ENCODE measurements at regions of chr20 and their contacts with region 1.

Region 1: DNA sequence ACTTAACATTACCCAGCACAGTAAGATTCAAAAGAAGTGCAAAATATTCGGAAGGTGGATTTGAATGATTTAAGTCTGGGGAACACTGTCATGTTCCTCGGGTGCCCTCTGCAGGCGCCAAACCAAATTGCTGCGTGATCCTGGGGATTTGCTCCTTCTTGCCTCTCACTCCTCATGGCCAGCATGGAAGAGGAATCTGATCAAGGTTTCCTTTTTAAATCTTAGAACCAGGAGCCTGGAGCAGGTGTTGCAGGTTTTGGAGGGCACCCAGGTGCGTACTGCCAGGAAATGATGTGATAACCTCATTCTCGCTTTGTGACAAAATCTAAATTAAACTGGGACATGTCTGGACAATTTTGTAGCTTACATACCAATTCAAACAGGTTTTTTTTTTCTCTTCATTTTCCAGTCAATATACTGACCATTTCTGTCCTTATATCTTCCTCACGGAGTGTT is 8.1 kb upstream of the PFDN4 start:
- DNase-seq: peak; percentile 70
- H3K4me3 ChIP-seq: peak overlapping the region in 1 of 2 experiments; percentile 45; a peak in 1 of 4 replicates
- H3K27ac ChIP-seq: no peak overlapping the region
- H3K4me1 ChIP-seq: no peaks in the 10 kb centered on the region
- H3K27me3 ChIP-seq: no peaks in the 10 kb centered on the region
- CTCF ChIP-seq: peak; percentile 97
- EP300 ChIP-seq: no peak
- RAD21 ChIP-seq: peak; percentile 96

Region 2: DNA sequence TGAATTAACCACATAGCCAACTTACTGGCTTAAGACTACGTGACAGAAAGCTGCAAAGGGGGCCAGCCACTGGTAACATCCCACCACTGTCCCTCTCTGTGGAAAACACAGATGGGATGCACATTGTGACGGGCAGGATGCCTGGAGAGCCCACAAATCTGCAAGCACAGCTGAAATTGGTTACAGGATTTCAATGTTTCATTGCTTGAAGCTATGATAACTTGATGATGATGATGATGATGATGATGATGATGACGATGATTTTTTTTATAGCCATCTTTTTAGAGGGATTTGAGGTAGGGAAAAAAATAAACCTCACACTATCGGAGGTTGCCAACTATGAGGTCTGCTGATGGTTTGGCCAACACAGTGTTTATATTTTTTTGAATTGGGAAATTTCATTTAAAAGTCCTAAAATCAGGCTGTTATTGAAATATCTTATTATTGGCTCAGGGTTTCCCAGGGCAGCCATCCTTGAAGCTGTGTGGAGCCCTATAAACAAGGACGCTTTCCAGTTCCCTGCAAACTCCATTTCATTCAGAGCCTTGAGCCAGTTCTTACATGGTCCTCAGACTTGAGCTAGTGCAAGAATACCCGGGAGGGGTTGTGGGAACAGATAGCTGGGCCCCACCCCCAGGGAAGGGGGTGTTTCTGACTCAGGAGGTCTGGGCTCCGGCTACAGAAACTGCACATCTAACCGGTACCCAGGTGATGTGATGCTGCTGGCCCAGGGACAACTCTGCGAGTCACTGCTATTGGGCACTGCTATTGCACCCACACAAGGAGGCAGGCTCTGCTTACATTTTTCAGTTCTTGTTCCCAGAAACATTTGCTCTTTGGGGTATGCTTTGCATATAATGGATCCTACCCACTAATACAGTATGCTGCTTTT is 156.4 kb before region 1 on chr20:
- CTCF ChIA-PET with region 1: no interaction called
- POLR2A ChIA-PET with region 1: no interaction called
- DNase-seq: no peak
- H3K4me3 ChIP-seq: no peak overlapping the region
- H3K27ac ChIP-seq: no peak overlapping the region
- H3K4me1 ChIP-seq: no peaks in the 10 kb centered on the region; a peak in 1 of 4 replicates
- H3K27me3 ChIP-seq: no peaks in the 10 kb centered on the region
- CTCF ChIP-seq: no peak
- EP300 ChIP-seq: no peak
- RAD21 ChIP-seq: no peak

Region 3: GRCh38 chr20:54093423-54094267 is 106.1 kb before region 1 on chr20:
- CTCF ChIA-PET with region 1: interaction called, 499 read pairs
- POLR2A ChIA-PET with region 1: no interaction called
- DNase-seq: no peak
- H3K4me3 ChIP-seq: no peak overlapping the region
- H3K27ac ChIP-seq: no peak overlapping the region
- H3K4me1 ChIP-seq: peaks cover 0 to 3% of the 10 kb centered on the region in 2 experiments; a peak in 1 of 4 replicates
- H3K27me3 ChIP-seq: no peaks in the 10 kb centered on the region; the same call in 1 of the 2 replicates
- CTCF ChIP-seq: no peak
- EP300 ChIP-seq: no peak
- RAD21 ChIP-seq: no peak

Region 4: GRCh38 chr20:54173653-54174456 is 25.9 kb before region 1 on chr20 and contains the start of gene CYP24A1:
- CTCF ChIA-PET with region 1: interaction called, 28 read pairs
- POLR2A ChIA-PET with region 1: no interaction called
- DNase-seq: peak; percentile 52
- H3K4me3 ChIP-seq: peak within 1 kb of the TSS; percentile 34 to 51; a peak in 3 of 4 replicates
- H3K27ac ChIP-seq: no peak within 1 kb of the TSS
- H3K4me1 ChIP-seq: peaks cover 5 to 12% of the 10 kb centered on the region in 2 experiments; a peak in 1 of 4 replicates
- H3K27me3 ChIP-seq: peaks cover 19% of the 10 kb centered on the region; the same call in 1 of the 2 replicates
- CTCF ChIP-seq: no peak
- EP300 ChIP-seq: no peak
- RAD21 ChIP-seq: no peak
- polyA plus RNA-seq, gene CYP24A1: 8.8 and 9.1 TPM in 2 replicates

Region 5: GRCh38 chr20:54188132-54188849 is 11.5 kb before region 1 on chr20:
- CTCF ChIA-PET with region 1: interaction called, 28 read pairs
- POLR2A ChIA-PET with region 1: no interaction called
- DNase-seq: no peak
- H3K4me3 ChIP-seq: no peak overlapping the region
- H3K27ac ChIP-seq: no peak overlapping the region
- H3K4me1 ChIP-seq: peaks cover 0 to 6% of the 10 kb centered on the region in 2 experiments; a peak in 3 of 4 replicates
- H3K27me3 ChIP-seq: no peaks in the 10 kb centered on the region
- CTCF ChIP-seq: no peak
- EP300 ChIP-seq: no peak
- RAD21 ChIP-seq: no peak